PC-3 (cell line): ENCODE measurements at regions of chr5 and their contacts with region 1.

Region 1: DNA sequence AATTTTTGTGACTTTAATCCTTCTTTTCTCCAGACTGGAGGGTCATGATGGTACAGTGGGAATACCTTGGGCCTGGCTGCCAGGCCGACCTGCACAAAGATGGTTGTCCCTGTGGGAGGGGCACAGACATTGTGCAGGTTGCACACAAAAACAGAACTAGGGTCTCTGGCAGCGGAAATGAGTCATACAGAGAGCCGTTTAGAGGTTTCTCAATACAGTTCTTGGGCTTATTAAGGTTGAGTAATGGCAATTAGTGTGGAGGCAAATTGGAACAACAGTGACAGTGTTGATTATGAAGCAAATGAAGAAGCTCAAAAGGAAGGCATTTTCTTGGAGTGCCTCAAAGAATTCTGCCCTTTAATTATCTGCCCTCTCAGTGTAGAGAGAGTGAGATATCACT is 173.6 kb downstream of the TENT4A start:
- DNase-seq: no peak
- ATAC-seq: no peak
- H3K4me3 ChIP-seq: no peak overlapping the region
- H3K27ac ChIP-seq: no peak overlapping the region
- H3K4me1 ChIP-seq: no peaks in the 10 kb centered on the region
- H3K27me3 ChIP-seq: peaks cover 23% of the 10 kb centered on the region; the same call in 1 of the 2 replicates
- CTCF ChIP-seq: no peak

Region 2: DNA sequence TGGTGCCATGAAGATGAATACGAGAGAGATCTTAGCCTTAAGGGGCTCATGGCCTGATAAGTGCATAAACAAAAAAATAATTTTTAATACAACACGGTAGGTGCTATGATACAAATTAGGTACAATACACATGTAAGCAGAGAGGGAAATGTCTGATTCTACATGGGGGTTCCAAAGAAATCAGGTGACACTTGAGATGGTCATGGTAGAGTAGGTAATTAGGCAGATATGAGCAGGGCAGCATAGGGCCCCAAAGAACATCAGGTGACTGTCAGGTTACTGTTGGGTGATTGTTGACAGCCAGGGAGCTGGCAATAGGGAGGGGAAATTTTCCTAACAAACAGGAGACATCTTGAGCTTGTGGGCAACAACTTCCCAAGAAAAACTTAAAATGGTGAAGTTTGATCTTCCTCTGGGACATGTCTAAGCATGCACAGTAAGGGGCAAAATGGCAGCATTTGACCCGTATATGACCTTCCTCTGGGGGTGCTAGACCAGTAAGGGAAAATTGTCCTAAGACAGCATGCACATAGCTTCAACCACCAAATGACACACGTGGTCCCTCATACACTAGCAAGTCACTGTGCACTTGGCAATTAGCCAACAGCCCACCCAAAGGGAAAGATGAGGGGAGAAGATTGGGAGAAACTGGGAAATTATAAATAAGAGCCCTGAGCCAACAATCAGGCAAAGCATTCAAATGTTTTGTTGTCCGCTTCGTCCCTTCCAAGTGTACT is 210.9 kb before region 1 on chr5:
- CTCF ChIA-PET with region 1: no interaction called
- POLR2A ChIA-PET with region 1: no interaction called
- intact Hi-C with region 1: no loop called
- DNase-seq: no peak
- ATAC-seq: no peak
- H3K4me3 ChIP-seq: no peak overlapping the region
- H3K27ac ChIP-seq: no peak overlapping the region
- H3K4me1 ChIP-seq: no peaks in the 10 kb centered on the region
- H3K27me3 ChIP-seq: no peaks in the 10 kb centered on the region
- CTCF ChIP-seq: peak; percentile 12; the same call in 1 of the 2 replicates

Region 3: DNA sequence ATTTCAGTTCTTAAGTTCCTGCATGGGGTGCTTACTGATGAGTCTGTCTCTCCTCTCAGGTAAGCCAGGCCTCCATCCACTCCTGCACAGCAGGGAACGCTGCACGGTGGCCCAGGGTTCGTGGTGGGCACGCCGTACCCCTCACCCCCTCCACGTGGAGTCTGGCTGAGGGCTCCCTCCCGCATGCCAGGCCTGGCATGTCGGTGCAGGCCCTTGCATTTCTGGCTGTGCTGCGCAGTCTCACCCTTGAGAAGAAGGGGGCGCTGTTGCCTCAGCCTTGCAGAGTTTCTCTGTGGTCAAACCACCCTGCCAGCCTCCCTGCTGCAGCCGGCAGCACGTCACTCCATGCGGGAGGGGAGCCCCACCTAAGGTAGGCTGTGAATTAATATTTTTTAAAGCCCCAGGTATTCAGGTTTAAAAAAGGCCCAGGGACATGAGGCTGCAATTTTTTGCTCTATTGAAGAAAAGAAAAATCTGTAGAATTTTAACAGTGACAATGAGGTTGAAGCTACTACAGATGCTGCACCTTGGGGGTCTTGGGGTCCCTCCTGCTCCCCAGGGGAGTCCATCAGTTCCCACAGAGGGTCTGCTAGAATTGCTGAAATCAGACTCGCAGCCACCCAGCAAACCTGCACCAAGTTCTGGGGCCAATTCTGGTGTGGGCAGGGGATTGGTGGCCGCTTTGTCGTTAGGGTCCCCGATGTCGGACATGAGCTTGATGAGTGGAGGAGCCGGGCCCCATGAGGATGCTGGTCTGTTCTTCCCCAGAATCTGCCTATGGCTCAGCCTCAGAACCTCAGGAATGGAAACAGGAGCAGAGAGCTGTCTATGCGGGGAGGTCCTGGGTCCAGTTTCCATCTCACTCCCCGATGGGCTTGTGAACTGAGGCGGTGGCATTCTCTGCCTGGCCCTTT is 121.0 kb before region 1 on chr5:
- CTCF ChIA-PET with region 1: no interaction called
- POLR2A ChIA-PET with region 1: no interaction called
- intact Hi-C with region 1: no loop called
- DNase-seq: peak; percentile 97
- ATAC-seq: peak; percentile 66
- H3K4me3 ChIP-seq: peak overlapping the region; percentile 49
- H3K27ac ChIP-seq: peak overlapping the region; percentile 86
- H3K4me1 ChIP-seq: peaks cover 23% of the 10 kb centered on the region
- H3K27me3 ChIP-seq: no peaks in the 10 kb centered on the region
- CTCF ChIP-seq: peak; percentile 99

Region 4: GRCh38 chr5:7745882-7746610 is 859.2 kb after region 1 on chr5:
- CTCF ChIA-PET with region 1: no interaction called
- POLR2A ChIA-PET with region 1: interaction called, 11 read pairs
- intact Hi-C with region 1: no loop called
- DNase-seq: peak; percentile 84
- ATAC-seq: peak; percentile 57
- H3K4me3 ChIP-seq: no peak overlapping the region
- H3K27ac ChIP-seq: no peak overlapping the region
- H3K4me1 ChIP-seq: peaks cover 10% of the 10 kb centered on the region; the same call in 1 of the 2 replicates
- H3K27me3 ChIP-seq: peaks cover 42% of the 10 kb centered on the region
- CTCF ChIP-seq: peak; percentile 98